AG04450 (cell line): ENCODE measurements at regions of chr20 and their contacts with region 1.

Region 1: GRCh38 chr20:59948828-59949720 is 8.9 kb downstream of the FAM217B start:
- DNase-seq: peak; percentile 45
- H3K4me3 ChIP-seq: no peak overlapping the region
- H3K27ac ChIP-seq: no peak overlapping the region
- H3K27me3 ChIP-seq: no peaks in the 10 kb centered on the region
- CTCF ChIP-seq: peak; percentile 73

Region 2: GRCh38 chr20:59880198-59880597 is 68.9 kb before region 1 on chr20:
- CTCF ChIA-PET with region 1: no interaction called
- POLR2A ChIA-PET with region 1: no interaction called
- DNase-seq: no peak
- H3K4me3 ChIP-seq: no peak overlapping the region
- H3K27ac ChIP-seq: no peak overlapping the region
- H3K27me3 ChIP-seq: no peaks in the 10 kb centered on the region
- CTCF ChIP-seq: no peak

Region 3: GRCh38 chr20:59933849-59934596 is 15.1 kb before region 1 on chr20:
- CTCF ChIA-PET with region 1: interaction called, 14 read pairs
- POLR2A ChIA-PET with region 1: no interaction called
- DNase-seq: no peak
- H3K4me3 ChIP-seq: peak overlapping the region; percentile 60
- H3K27ac ChIP-seq: no peak overlapping the region
- H3K27me3 ChIP-seq: peaks cover 3% of the 10 kb centered on the region
- CTCF ChIP-seq: peak; percentile 86

Region 4: DNA sequence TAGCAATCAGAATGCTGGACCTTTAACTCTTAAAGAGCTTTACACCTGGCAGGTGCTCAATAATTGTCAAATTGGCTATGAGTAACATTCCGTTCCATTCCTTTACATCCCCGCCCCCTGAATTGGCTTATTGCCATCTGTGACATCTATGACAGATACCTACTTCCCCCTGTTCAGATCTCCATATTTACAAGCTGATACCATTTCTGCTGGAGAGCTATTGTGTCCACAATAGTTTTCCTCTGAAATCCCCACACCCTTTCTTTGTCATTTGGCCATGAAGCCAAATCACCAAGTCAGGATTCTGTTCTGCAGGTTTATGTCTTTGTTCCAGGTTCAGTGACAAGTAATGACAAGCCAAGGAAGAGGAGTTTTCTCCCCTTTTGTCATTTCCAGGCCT is 12.3 kb after region 1 on chr20:
- CTCF ChIA-PET with region 1: interaction called, 18 read pairs
- POLR2A ChIA-PET with region 1: no interaction called
- DNase-seq: no peak
- H3K4me3 ChIP-seq: no peak overlapping the region
- H3K27ac ChIP-seq: no peak overlapping the region
- H3K27me3 ChIP-seq: no peaks in the 10 kb centered on the region
- CTCF ChIP-seq: no peak

Region 5: GRCh38 chr20:60036346-60037119 is 87.5 kb after region 1 on chr20:
- CTCF ChIA-PET with region 1: interaction called, 10 read pairs
- POLR2A ChIA-PET with region 1: no interaction called
- DNase-seq: no peak
- H3K4me3 ChIP-seq: no peak overlapping the region
- H3K27ac ChIP-seq: no peak overlapping the region
- H3K27me3 ChIP-seq: peaks cover 2% of the 10 kb centered on the region
- CTCF ChIP-seq: no peak